GM12878 (cell line): ENCODE measurements at regions of chr2 and their contacts with region 1.

Region 1: DNA sequence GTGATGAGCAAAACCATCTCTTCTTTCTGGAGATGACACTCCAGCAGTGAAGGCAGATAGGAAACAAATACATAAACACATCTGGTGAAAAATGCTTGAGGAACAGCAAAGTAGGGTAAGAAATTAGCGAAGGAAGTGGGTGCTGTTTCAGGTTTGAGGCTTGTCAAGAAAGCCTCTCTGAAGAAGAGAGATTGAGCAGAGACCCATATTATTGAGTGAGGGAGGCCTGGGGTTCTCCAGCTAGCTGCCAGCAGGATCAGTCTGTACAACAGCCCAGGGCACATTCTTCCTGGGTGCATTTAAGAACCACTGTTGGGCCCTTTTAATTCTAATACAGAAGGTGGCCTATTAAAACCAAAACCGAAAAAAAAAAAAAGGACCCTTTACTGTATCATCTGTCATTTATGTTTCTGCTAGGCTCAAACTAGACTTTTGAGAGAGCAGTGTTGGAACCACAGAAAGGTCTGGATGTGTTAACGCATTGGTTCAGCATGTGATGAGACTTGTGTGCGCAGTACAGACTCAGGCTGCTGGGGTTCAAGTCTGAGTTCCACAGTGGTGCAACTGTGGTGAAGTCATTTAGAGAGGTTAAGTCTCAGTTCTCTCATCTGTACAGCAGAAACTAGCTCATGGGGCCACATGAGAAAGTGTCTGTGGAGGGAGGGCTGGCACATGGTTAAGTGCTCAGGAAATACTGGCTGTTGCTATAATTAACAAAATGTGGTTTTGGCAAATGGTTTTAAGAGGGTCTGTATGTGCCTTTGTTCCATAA is 28.9 kb downstream of the MGAT5 start:
- DNase-seq: peak; percentile 96
- ATAC-seq: peak; percentile 91
- H3K4me3 ChIP-seq: peak overlapping the region; percentile 47
- H3K27ac ChIP-seq: peak overlapping the region; percentile 95
- H3K4me1 ChIP-seq: peaks cover 87% of the 10 kb centered on the region
- H3K27me3 ChIP-seq: no peaks in the 10 kb centered on the region
- CTCF ChIP-seq: no peak
- EP300 ChIP-seq: peak; percentile 89 to 90
- POLR2A ChIP-seq: 0 out of 2 replicates have a peak, but pooled peaks have one; percentile 40
- RAD21 ChIP-seq: no peak

Region 2: GRCh38 chr2:134232868-134233727 is 49.7 kb before region 1 on chr2:
- CTCF ChIA-PET with region 1: interaction called, 3 read pairs
- POLR2A ChIA-PET with region 1: no interaction called
- RAD21 ChIA-PET with region 1: interaction called, 4 read pairs
- SMC1A ChIA-PET with region 1: interaction called, 6 read pairs
- in situ Hi-C with region 1: no loop called
- intact Hi-C with region 1: loop called (anchors 2 kb)
- DNase-seq: no peak
- ATAC-seq: peak; percentile 59
- H3K4me3 ChIP-seq: peak overlapping the region; percentile 19
- H3K27ac ChIP-seq: peak overlapping the region; percentile 83
- H3K4me1 ChIP-seq: peaks cover 72% of the 10 kb centered on the region
- H3K27me3 ChIP-seq: no peaks in the 10 kb centered on the region
- CTCF ChIP-seq: 0 out of 6 replicates have a peak, but pooled peaks of 2 of the 3 experiments have one; percentile 6 to 17
- EP300 ChIP-seq: 0 out of 4 replicates have a peak, but pooled peaks have one; percentile 4 to 22
- POLR2A ChIP-seq: no peak
- RAD21 ChIP-seq: no peak

Region 3: GRCh38 chr2:134253804-134254203 is 29.0 kb before region 1 on chr2 and contains the start of gene MGAT5:
- CTCF ChIA-PET with region 1: interaction called, 5 read pairs
- POLR2A ChIA-PET with region 1: no interaction called
- RAD21 ChIA-PET with region 1: interaction called, 19 read pairs
- SMC1A ChIA-PET with region 1: interaction called, 21 read pairs
- in situ Hi-C with region 1: no loop called
- intact Hi-C with region 1: loop called (anchors 1 kb)
- DNase-seq: no peak
- ATAC-seq: peak; percentile 8
- H3K4me3 ChIP-seq: peak within 1 kb of the TSS; percentile 21; the same call in 1 of the 2 replicates
- H3K27ac ChIP-seq: peak within 1 kb of the TSS; percentile 67
- H3K4me1 ChIP-seq: peaks cover 82% of the 10 kb centered on the region
- H3K27me3 ChIP-seq: no peaks in the 10 kb centered on the region
- CTCF ChIP-seq: no peak
- EP300 ChIP-seq: no peak
- POLR2A ChIP-seq: no peak
- RAD21 ChIP-seq: no peak
- polyA plus RNA-seq, gene MGAT5: 9.1 to 9.8 TPM

Region 4: GRCh38 chr2:134261398-134262131 is 21.2 kb before region 1 on chr2:
- CTCF ChIA-PET with region 1: interaction called, 7 read pairs
- POLR2A ChIA-PET with region 1: interaction called, 8 read pairs
- RAD21 ChIA-PET with region 1: interaction called, 10 read pairs
- SMC1A ChIA-PET with region 1: interaction called, 21 read pairs
- in situ Hi-C with region 1: no loop called
- intact Hi-C with region 1: no loop called
- DNase-seq: no peak
- ATAC-seq: peak; percentile 78
- H3K4me3 ChIP-seq: no peak overlapping the region
- H3K27ac ChIP-seq: peak overlapping the region; percentile 74
- H3K4me1 ChIP-seq: peaks cover 68% of the 10 kb centered on the region
- H3K27me3 ChIP-seq: no peaks in the 10 kb centered on the region
- CTCF ChIP-seq: no peak
- EP300 ChIP-seq: no peak
- POLR2A ChIP-seq: no peak
- RAD21 ChIP-seq: no peak

Region 5: DNA sequence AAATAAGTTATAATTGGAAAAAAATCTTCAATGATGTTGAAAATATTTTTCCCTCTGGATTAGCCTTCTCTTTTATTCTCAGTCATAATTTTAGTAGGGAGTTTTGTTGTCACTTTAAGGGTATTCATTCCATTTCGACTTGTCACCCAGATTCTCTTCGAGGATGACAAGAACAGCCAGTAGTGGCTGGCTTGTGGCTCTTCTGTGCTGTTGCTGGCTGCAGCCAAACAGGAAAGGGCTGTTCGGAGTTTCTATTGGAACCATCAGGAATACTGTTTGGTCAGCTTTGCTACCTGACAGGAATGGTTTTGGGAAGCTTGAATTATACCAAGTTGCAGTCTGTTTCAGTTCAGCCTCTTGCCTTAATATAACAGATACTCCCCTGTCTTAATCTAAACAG is 12.6 kb after region 1 on chr2:
- CTCF ChIA-PET with region 1: interaction called, 3 read pairs
- POLR2A ChIA-PET with region 1: interaction called, 4 read pairs
- RAD21 ChIA-PET with region 1: interaction called, 8 read pairs
- SMC1A ChIA-PET with region 1: interaction called, 11 read pairs
- in situ Hi-C with region 1: no loop called
- intact Hi-C with region 1: loop called (anchors 1 kb)
- DNase-seq: no peak
- ATAC-seq: no peak
- H3K4me3 ChIP-seq: no peak overlapping the region
- H3K27ac ChIP-seq: peak overlapping the region; percentile 52; the same call in 1 of the 2 replicates
- H3K4me1 ChIP-seq: peaks cover 57% of the 10 kb centered on the region
- H3K27me3 ChIP-seq: no peaks in the 10 kb centered on the region
- CTCF ChIP-seq: no peak
- EP300 ChIP-seq: no peak
- POLR2A ChIP-seq: no peak
- RAD21 ChIP-seq: no peak